PC-3 (cell line): ENCODE measurements at regions of chr12 and their contacts with region 1.

Region 1: GRCh38 chr12:29519585-29520182 is 22.2 kb upstream of the OVCH1 start:
- DNase-seq: peak; percentile 86
- ATAC-seq: peak; percentile 15; the same call in 1 of the 2 replicates
- H3K4me3 ChIP-seq: no peak overlapping the region
- H3K27ac ChIP-seq: no peak overlapping the region
- H3K4me1 ChIP-seq: peaks cover 11% of the 10 kb centered on the region
- H3K27me3 ChIP-seq: no peaks in the 10 kb centered on the region
- CTCF ChIP-seq: peak; percentile 95

Region 2: GRCh38 chr12:29309320-29309902 is 210.3 kb before region 1 on chr12:
- CTCF ChIA-PET with region 1: interaction called, 3 read pairs
- POLR2A ChIA-PET with region 1: no interaction called
- intact Hi-C with region 1: loop called (anchors 1 kb)
- DNase-seq: peak; percentile 73
- ATAC-seq: peak; percentile 83
- H3K4me3 ChIP-seq: no peak overlapping the region
- H3K27ac ChIP-seq: no peak overlapping the region
- H3K4me1 ChIP-seq: no peaks in the 10 kb centered on the region
- H3K27me3 ChIP-seq: no peaks in the 10 kb centered on the region
- CTCF ChIP-seq: peak; percentile 93

Region 3: GRCh38 chr12:29380536-29381523 is 138.9 kb before region 1 on chr12 and contains the start of gene ERGIC2:
- CTCF ChIA-PET with region 1: interaction called, 8 read pairs
- POLR2A ChIA-PET with region 1: no interaction called
- intact Hi-C with region 1: loop called (anchors 1 kb)
- DNase-seq: peak; percentile 100
- ATAC-seq: peak; percentile 94
- H3K4me3 ChIP-seq: peak within 1 kb of the TSS; percentile 77
- H3K27ac ChIP-seq: peak within 1 kb of the TSS; percentile 81
- H3K4me1 ChIP-seq: peaks cover 22% of the 10 kb centered on the region
- H3K27me3 ChIP-seq: no peaks in the 10 kb centered on the region
- CTCF ChIP-seq: no peak
- total RNA-seq, gene ERGIC2: 142 and 184 TPM in 2 replicates

Region 4: DNA sequence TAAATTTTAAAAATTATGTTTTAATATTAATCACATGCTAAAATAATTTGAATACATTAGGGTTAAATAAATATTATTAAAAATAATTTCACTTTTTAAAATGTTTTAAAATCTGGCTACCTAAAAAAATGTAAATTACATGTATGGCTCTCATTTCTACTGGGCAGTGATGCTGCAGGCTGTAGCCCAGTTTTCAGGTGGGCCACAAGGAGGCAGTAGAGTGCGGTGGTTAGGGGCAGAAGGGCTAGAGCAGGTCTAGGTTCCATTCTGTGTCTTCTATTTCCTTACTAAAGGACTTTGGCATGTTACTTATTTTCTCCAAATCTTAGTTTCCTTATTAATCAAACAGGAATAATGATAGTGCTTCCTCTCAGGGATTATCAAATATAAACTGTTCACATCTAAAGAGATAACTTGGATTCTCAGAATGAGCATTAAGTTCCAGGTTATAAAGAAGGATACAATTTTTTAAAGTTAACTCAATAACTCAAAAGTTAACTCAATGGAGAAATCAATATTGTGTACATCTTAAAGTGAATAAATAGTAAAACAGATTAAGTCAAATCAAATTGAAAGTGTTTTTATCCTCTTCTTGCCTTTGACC is 32.7 kb after region 1 on chr12:
- CTCF ChIA-PET with region 1: interaction called, 3 read pairs
- POLR2A ChIA-PET with region 1: no interaction called
- intact Hi-C with region 1: loop called (anchors 1 kb)
- DNase-seq: peak; percentile 83
- ATAC-seq: peak; percentile 81
- H3K4me3 ChIP-seq: no peak overlapping the region
- H3K27ac ChIP-seq: no peak overlapping the region
- H3K4me1 ChIP-seq: peaks cover 6% of the 10 kb centered on the region
- H3K27me3 ChIP-seq: no peaks in the 10 kb centered on the region
- CTCF ChIP-seq: peak; percentile 96

Region 5: GRCh38 chr12:29743801-29744200 is 224.1 kb after region 1 on chr12:
- CTCF ChIA-PET with region 1: no interaction called
- POLR2A ChIA-PET with region 1: no interaction called
- intact Hi-C with region 1: no loop called
- DNase-seq: peak; percentile 72
- ATAC-seq: peak; percentile 45
- H3K4me3 ChIP-seq: no peak overlapping the region
- H3K27ac ChIP-seq: no peak overlapping the region
- H3K4me1 ChIP-seq: no peaks in the 10 kb centered on the region
- H3K27me3 ChIP-seq: peaks cover 9% of the 10 kb centered on the region; the same call in 1 of the 2 replicates
- CTCF ChIP-seq: no peak

Region 6: DNA sequence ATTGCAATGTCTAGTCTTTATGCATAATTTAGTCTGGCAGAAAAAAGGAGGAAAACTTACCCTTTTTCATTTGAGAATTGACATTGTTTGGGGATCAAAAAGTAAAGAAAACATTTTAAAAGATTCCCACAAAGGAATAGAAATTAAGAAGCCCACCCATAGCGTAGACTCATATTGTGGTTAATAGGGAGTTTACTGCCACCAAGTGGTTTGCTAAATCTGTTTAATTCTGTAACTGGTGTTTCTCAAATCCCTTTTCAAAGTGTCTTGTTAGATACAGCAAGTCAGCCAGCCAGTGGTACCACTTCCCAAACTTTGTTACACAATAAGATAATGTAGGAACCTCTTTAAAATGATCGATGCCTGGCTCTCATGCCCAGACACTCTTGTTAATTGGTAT is 995.7 kb after region 1 on chr12:
- CTCF ChIA-PET with region 1: no interaction called
- POLR2A ChIA-PET with region 1: no interaction called
- intact Hi-C with region 1: loop called (anchors 2 kb)
- DNase-seq: peak; percentile 6
- ATAC-seq: no peak
- H3K4me3 ChIP-seq: no peak overlapping the region
- H3K27ac ChIP-seq: no peak overlapping the region
- H3K4me1 ChIP-seq: 0 out of 2 replicates have a peak, but pooled peaks cover 5% of the 10 kb centered on the region
- H3K27me3 ChIP-seq: no peaks in the 10 kb centered on the region
- CTCF ChIP-seq: peak; percentile 53